PC-3 (cell line): ENCODE measurements at regions of chr6 and their contacts with region 1.

Region 1: DNA sequence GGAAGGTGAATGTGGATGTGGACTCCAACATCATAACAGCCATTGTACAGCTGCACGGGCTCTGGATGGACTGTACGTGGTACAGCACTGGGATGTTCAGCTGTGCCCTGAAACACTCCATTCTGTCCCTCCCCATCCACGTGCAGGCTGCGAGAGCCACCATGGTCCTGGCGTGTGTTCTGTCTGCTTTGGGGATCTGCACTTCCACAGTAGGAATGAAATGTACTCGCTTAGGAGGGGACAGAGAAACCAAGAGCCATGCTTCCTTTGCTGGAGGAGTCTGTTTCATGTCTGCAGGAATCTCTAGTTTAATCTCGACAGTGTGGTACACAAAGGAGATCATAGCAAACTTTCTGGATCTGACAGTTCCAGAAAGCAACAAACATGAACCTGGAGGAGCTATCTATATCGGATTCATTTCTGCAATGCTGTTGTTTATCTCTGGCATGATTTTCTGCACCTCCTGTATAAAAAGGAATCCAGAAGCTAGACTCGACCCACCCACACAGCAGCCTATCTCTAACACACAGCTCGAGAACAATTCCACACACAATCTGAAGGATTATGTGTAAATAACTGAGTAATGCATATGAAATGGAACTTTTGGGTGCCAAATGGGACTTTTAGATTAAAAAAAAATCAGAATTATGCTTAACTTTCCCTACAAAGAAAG is 12.1 kb downstream of the CLDN20 start:
- DNase-seq: no peak
- ATAC-seq: no peak
- H3K4me3 ChIP-seq: no peak overlapping the region
- H3K27ac ChIP-seq: no peak overlapping the region
- H3K4me1 ChIP-seq: peaks cover 8% of the 10 kb centered on the region
- H3K27me3 ChIP-seq: no peaks in the 10 kb centered on the region
- CTCF ChIP-seq: no peak

Region 2: GRCh38 chr6:154928325-154928922 is 347.5 kb before region 1 on chr6:
- CTCF ChIA-PET with region 1: no interaction called
- POLR2A ChIA-PET with region 1: no interaction called
- intact Hi-C with region 1: no loop called
- DNase-seq: peak; percentile 76
- ATAC-seq: peak; percentile 21; the same call in 1 of the 2 replicates
- H3K4me3 ChIP-seq: no peak overlapping the region
- H3K27ac ChIP-seq: no peak overlapping the region
- H3K4me1 ChIP-seq: peaks cover 19% of the 10 kb centered on the region
- H3K27me3 ChIP-seq: no peaks in the 10 kb centered on the region
- CTCF ChIP-seq: peak; percentile 81

Region 3: DNA sequence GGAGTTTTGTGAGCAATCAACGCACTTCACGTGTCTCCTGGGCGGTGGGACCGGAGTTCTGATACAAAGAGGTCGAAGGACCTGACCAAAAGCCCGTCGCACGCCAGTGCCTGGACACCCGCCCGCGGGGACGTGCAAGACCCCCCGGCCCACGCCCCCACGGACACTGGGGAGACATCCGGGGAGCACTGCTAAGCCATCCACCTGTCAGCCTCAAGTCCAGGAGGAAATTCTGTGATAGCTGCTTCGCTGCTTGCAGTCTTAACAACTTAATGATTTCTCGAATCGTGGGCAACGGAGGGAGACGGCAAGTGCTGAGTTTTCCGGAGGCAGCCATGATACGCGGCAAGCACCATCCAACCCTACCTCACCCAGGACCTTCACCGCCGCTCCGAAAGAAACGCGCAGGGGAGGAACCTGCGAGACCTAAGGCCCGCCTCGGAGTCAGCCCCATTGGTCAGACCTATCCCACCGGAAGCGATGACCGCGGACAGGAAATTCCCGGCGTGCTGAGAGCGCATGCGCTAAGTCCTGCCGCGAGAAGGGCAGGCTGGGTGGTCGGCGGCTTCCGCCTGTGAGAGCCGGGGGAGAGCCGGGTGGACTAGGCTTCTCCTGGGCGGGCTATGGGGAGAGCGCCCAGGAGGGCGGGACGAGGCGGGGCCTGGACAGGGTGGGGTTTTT is 38.3 kb after region 1 on chr6 and contains the start of gene TFB1M:
- CTCF ChIA-PET with region 1: interaction called, 3 read pairs
- POLR2A ChIA-PET with region 1: interaction called, 4 read pairs
- intact Hi-C with region 1: loop called (anchors 2 kb)
- DNase-seq: peak; percentile 98
- ATAC-seq: peak; percentile 92
- H3K4me3 ChIP-seq: peak within 1 kb of the TSS; percentile 89
- H3K27ac ChIP-seq: peak within 1 kb of the TSS; percentile 84
- H3K4me1 ChIP-seq: peaks cover 38% of the 10 kb centered on the region
- H3K27me3 ChIP-seq: no peaks in the 10 kb centered on the region
- CTCF ChIP-seq: no peak
- total RNA-seq, gene TFB1M: 23.1 and 25.6 TPM in 2 replicates